ENCODE measurements at regions of chr3 and their contacts with region 1.

Region 1: GRCh38 chr3:56251343-56251945 is 216.8 kb downstream of the ERC2 start:
- DNase-seq: peak in 3 of 10 donors; percentile 18 to 37 (median 20)

Region 2: DNA sequence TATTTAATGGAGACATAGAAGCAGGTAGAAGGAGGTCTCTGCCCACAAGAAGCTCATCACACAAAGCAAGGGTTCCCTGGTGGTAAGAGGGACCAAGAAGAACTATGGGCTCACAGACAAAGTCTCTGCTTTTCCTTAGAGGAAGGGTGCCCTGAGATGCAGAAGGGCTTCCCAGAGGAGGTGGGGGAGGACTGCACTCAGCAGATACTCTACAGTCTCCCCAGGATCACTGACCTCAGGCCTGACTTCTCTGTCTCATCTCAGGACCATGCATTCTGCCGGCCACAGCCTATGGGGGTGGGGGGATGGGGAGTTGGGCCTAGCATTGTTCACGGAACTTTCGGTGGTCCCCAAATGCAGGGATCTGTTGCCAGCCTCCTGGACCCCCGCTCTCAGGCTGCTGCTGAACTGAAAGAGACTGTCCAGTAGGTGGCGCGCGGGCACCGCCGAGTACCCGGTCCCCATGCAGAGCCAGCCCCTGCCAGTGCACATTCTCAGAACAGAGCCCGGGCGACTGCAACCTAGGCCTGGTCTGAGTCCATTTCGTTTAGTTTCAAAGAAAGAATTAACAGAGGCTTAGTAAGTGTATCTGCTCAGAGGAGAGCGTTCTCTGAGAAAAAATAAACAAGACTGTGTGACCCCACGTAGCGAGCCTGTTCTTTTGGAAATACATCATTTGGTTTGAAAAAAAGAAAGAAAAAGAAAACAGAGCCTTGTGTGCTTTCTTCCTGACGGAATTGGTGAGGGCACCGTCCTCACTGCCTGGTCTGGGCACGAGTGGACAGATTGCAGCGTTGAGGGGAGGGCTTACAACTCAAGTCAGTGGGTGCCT is 1397.7 kb before region 1 on chr3:
- intact Hi-C with region 1: loop called (anchors 5 kb)
- DNase-seq: peak; percentile 77 to 98 (median 89)

Region 3: GRCh38 chr3:55818485-55818884 is 433.0 kb before region 1 on chr3:
- intact Hi-C with region 1: loop called (anchors 10 kb)
- DNase-seq: peak in 6 of 10 donors; percentile 11 to 87 (median 42)

Region 4: GRCh38 chr3:57158813-57159738 is 907.6 kb after region 1 on chr3:
- intact Hi-C with region 1: no loop called
- DNase-seq: no peak